Lower leg skin (tissue), 4 donors: ENCODE measurements at regions of chr10 and their contacts with region 1.

Region 1: DNA sequence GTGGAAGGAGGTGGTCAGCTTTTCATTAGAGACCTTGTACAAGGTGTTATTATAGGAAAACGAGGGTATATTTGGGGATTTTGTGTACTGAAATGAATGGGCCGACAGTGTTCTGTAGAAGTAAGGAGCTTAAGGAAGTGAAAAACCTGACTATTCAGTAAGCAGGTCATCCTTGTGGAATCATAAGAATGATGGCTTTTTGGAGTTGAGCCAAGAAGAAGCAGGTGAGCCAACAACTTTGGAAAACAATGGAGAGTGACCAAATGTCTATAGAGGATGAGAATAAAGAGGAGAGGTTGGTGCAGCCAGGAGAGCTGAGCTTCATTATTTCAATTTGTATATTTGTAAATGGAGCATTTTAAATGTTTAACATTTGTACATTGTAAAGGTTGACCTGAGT is 595.7 kb downstream of the CCSER2 start:
- DNase-seq: no peak
- H3K4me3 ChIP-seq: no peak overlapping the region
- CTCF ChIP-seq: no peak
- POLR2A ChIP-seq: no peak

Region 2: GRCh38 chr10:83673316-83673715 is 1250.8 kb before region 1 on chr10:
- intact Hi-C with region 1: loop called (anchors 5 kb)
- DNase-seq: no peak
- H3K4me3 ChIP-seq: peak overlapping the region; percentile 3
- CTCF ChIP-seq: no peak
- POLR2A ChIP-seq: no peak

Region 3: DNA sequence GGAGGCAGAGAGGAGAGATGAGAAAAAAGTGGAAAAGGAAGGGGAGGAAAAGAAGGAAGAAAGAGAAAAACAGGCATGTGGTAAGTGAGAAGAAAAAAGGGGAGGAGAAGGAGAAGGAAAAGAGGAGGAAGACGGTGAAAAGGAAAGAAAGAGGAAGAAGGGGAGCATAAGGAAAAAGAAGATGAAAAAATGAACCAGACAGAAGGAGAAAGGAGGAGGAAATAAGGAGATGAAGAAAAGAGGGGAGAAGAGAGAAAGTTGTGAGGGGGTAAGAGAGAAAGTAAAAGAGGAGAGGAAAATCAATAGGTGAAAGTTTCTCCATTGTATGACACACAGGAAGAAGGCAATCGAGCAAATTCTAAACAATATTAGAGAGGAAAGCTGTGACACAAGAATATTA is 778.6 kb after region 1 on chr10:
- intact Hi-C with region 1: no loop called
- DNase-seq: no peak
- H3K4me3 ChIP-seq: no peak overlapping the region
- CTCF ChIP-seq: no peak
- POLR2A ChIP-seq: no peak